ENCODE measurements at regions of chr3 and their contacts with region 1.

Region 1: GRCh38 chr3:73100741-73101559 is 39.5 kb downstream of the EBLN2 start:
- DNase-seq: peak; percentile 65 to 80
- ATAC-seq: peak; percentile 86 to 97 (median 93)
- H3K4me3 ChIP-seq: no peak overlapping the region
- H3K27ac ChIP-seq: no peak overlapping the region
- H3K4me1 ChIP-seq: no peaks in the 10 kb centered on the region
- H3K27me3 ChIP-seq: no peaks in the 10 kb centered on the region
- CTCF ChIP-seq: peak; percentile 95

Region 2: GRCh38 chr3:72606005-72606800 is 494.7 kb before region 1 on chr3:
- intact Hi-C with region 1: no loop called
- DNase-seq: no peak
- ATAC-seq: no peak
- H3K4me3 ChIP-seq: no peak overlapping the region
- H3K27ac ChIP-seq: no peak overlapping the region
- H3K4me1 ChIP-seq: no peaks in the 10 kb centered on the region
- H3K27me3 ChIP-seq: no peaks in the 10 kb centered on the region
- CTCF ChIP-seq: no peak

Region 3: DNA sequence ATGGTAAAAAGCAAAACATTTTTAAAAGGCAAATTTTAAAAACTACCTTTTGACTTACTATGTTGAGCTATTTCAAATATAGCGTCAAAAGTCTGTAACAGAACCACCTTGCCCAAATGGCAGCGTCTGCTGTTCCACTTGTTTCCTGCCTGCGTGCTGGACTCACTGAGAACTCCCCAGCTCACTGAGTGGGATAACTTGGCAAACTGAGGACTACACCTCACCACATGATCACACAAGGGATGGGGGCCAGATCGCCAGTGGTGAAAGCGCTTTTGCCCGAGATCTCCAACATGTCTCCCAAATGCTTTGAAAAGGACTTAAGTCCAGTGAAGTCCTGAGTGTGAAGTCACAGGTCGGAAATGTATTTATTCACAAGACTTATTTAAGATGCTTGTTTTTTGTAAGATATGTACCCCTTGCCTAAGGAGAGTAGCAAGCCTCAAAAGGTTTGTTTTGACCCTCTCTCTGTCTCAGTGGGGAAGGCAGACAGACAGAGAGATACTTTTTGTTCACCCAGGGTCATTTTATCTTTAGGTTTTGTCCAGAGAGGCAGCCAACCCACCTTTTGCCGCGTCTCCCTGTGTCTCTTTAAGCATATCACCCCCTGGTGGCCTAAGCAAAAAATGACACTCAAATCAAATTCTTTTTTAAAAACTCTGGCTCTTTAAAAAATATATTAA is 331.2 kb after region 1 on chr3:
- intact Hi-C with region 1: loop called (anchors 2 to 5 kb)
- DNase-seq: no peak
- ATAC-seq: peak in 3 of 4 donors; percentile 36 to 73 (median 58)
- H3K4me3 ChIP-seq: no peak overlapping the region
- H3K27ac ChIP-seq: no peak overlapping the region
- H3K4me1 ChIP-seq: peaks cover 36% of the 10 kb centered on the region
- H3K27me3 ChIP-seq: no peaks in the 10 kb centered on the region
- CTCF ChIP-seq: peak; percentile 69

Region 4: GRCh38 chr3:73855813-73856514 is 755.0 kb after region 1 on chr3:
- intact Hi-C with region 1: loop called in 1 of 2 experiments (anchors 10 kb)
- DNase-seq: no peak
- ATAC-seq: no peak
- H3K4me3 ChIP-seq: no peak overlapping the region
- H3K27ac ChIP-seq: no peak overlapping the region
- H3K4me1 ChIP-seq: no peaks in the 10 kb centered on the region
- H3K27me3 ChIP-seq: no peaks in the 10 kb centered on the region
- CTCF ChIP-seq: no peak

Measured in psoas muscle (tissue), 8 donors.